Activated CD4-positive, alpha-beta T cell treated with anti-CD3 and anti-CD28 coated beads, Interleukin-2, amount 10 ng/mL, durations not matched to agents 24 days and 14 days (primary cell): ENCODE measurements at regions of chr3 and their contacts with region 1.

Region 1: GRCh38 chr3:141875374-141875892 is 1.0 kb upstream of the ATP1B3 start:
- DNase-seq: peak; percentile 95
- H3K4me3 Mint-ChIP-seq: peak overlapping the region; percentile 98
- H3K27ac Mint-ChIP-seq: peak overlapping the region; percentile 97
- H3K4me1 Mint-ChIP-seq: peaks cover 29% of the 10 kb centered on the region
- H3K27me3 Mint-ChIP-seq: peaks cover 2% of the 10 kb centered on the region

Region 2: GRCh38 chr3:141412087-141412935 is 463.1 kb before region 1 on chr3:
- intact Hi-C with region 1: loop called (anchors 5 kb)
- DNase-seq: peak; percentile 88
- H3K4me3 Mint-ChIP-seq: peak overlapping the region; percentile 83
- H3K27ac Mint-ChIP-seq: peak overlapping the region; percentile 99
- H3K4me1 Mint-ChIP-seq: peaks cover 48% of the 10 kb centered on the region
- H3K27me3 Mint-ChIP-seq: no peaks in the 10 kb centered on the region

Region 3: GRCh38 chr3:141738022-141738890 is 137.2 kb before region 1 on chr3 and contains the start of gene RNF7:
- intact Hi-C with region 1: loop called (anchors 1 kb)
- DNase-seq: peak; percentile 99
- H3K4me3 Mint-ChIP-seq: peak within 1 kb of the TSS; percentile 92
- H3K27ac Mint-ChIP-seq: peak within 1 kb of the TSS; percentile 98
- H3K4me1 Mint-ChIP-seq: peaks cover 23% of the 10 kb centered on the region
- H3K27me3 Mint-ChIP-seq: peaks cover 3% of the 10 kb centered on the region
- total RNA-seq, gene RNF7: 67.3 and 72.5 TPM in 2 replicates

Region 4: DNA sequence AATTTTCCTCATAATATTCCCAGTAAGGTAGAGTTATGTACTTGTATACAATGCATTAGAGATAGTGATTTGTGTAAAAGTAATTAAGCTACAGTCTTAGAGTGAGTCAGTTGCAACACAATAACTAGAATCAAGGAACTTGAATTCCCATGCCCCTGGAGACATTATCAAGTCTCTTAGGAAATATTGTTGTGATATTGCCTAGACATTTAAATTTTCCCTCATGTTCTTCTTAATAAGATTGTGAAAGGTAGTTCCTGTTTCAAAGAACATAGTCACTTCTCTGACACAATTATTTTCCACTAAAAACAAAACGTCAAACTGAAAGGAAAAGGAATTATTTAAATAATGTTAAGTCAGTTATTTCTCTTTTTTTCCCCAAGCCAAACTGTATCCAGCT is 11.9 kb before region 1 on chr3:
- intact Hi-C with region 1: no loop called
- DNase-seq: no peak
- H3K4me3 Mint-ChIP-seq: no peak overlapping the region
- H3K27ac Mint-ChIP-seq: no peak overlapping the region
- H3K4me1 Mint-ChIP-seq: peaks cover 2% of the 10 kb centered on the region
- H3K27me3 Mint-ChIP-seq: peaks cover 2% of the 10 kb centered on the region

Region 5: GRCh38 chr3:141905129-141905528 is 29.7 kb after region 1 on chr3:
- intact Hi-C with region 1: loop called (anchors 2 kb)
- DNase-seq: no peak
- H3K4me3 Mint-ChIP-seq: no peak overlapping the region
- H3K27ac Mint-ChIP-seq: peak overlapping the region; percentile 76
- H3K4me1 Mint-ChIP-seq: peaks cover 23% of the 10 kb centered on the region
- H3K27me3 Mint-ChIP-seq: no peaks in the 10 kb centered on the region

Region 6: DNA sequence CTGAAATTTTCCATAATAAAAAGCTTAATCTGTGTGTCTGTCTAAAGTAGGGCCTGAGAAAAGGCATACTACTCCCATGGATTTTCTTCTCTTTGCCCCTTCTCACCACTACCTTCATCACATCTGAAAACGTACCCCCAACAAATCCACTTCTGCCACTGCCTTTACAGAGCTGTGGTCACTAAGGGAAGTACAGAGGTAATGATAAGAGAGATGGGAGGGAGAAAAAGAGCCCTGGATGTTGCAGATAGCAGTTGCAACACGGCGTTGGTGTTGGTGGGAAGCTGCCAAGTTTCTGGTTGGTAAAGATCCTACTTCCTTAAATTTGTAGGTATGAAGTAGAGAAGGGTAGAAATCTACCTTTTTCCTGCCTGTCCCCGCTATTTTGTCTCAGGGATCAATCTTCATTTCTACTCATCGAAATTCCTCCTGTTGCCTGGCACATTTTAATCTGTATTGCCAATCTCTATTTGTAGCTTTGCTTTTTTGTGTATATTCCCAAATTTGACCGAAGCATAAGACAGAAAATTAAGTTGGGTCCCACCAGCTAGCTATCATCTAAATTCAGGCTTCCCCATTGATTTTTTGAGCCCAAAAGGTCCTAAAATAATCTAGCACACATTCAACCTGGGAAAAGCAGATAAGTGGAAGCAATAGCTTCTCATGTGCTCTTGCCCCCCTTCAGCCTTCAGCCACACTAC is 171.0 kb after region 1 on chr3:
- intact Hi-C with region 1: no loop called
- DNase-seq: no peak
- H3K4me3 Mint-ChIP-seq: no peak overlapping the region
- H3K27ac Mint-ChIP-seq: no peak overlapping the region
- H3K4me1 Mint-ChIP-seq: no peaks in the 10 kb centered on the region
- H3K27me3 Mint-ChIP-seq: no peaks in the 10 kb centered on the region

Region 7: DNA sequence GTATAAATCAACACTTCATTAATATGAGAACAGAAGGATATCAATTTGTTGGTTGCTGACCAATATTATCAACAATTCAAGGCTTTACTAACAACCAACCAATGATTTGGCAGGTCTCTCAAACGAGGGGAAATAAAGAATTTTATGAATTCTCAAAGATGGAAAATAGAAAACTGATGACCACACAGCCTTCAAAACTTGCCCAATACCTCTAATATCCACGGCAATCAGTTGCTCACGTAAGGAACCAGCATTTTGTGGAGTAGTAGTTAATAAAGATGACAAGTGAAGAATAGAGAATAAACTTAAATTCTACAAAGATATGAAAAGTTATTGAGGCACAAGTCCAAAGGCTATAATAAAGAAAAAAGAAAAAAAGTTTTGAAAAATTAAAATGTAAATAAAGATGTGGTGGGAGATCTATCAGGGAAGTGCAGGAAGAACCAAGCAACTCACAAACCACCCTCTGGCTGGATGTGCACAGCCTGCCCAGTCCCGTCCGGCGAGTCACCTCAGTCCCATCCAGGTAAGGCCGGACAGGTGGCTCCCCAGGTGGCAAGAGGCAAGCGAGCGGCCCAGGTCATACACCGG is 349.1 kb after region 1 on chr3:
- intact Hi-C with region 1: loop called (anchors 2 kb)
- DNase-seq: no peak
- H3K4me3 Mint-ChIP-seq: peak overlapping the region; percentile 95
- H3K27ac Mint-ChIP-seq: peak overlapping the region; percentile 53
- H3K4me1 Mint-ChIP-seq: peaks cover 10% of the 10 kb centered on the region
- H3K27me3 Mint-ChIP-seq: no peaks in the 10 kb centered on the region

Region 8: GRCh38 chr3:142353571-142353970 is 478.1 kb after region 1 on chr3:
- intact Hi-C with region 1: no loop called
- DNase-seq: no peak
- H3K4me3 Mint-ChIP-seq: no peak overlapping the region
- H3K27ac Mint-ChIP-seq: no peak overlapping the region
- H3K4me1 Mint-ChIP-seq: no peaks in the 10 kb centered on the region
- H3K27me3 Mint-ChIP-seq: no peaks in the 10 kb centered on the region